Kidney (tissue), 22 donors: ENCODE measurements at regions of chr2 and their contacts with region 1.

Region 1: GRCh38 chr2:30711646-30712085 is 95.6 kb downstream of the CAPN13 start:
- DNase-seq: peak; percentile 86 to 93 (median 89)
- H3K4me3 ChIP-seq: no peak overlapping the region
- H3K27ac ChIP-seq: no peak overlapping the region
- H3K4me1 ChIP-seq: peaks cover 0 to 3% (median 0%) of the 10 kb centered on the region in 3 donors
- H3K27me3 ChIP-seq: no peaks in the 10 kb centered on the region
- CTCF ChIP-seq: peak; percentile 99

Region 2: DNA sequence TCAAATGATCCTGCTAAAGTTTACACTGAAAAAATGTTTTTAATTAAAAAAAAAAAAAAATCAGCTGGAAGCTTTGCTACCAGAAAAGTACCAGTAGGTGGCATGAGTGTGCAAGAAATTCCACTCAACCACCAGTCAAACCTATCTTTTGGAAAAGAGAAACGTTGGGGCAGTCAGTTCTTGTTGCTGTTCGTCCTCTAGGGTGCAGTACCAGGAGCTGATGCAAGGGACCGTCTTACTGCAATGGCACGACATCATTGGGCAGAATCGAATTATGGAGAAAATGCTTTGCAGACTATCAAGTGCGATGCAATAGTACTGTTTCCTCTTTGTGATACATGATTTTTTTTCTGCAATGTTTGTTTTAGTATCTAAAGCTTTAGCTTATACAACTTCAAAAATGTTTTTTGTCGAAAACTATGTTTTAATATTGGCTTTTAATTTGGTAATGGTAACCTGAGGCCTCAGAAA is 546.6 kb before region 1 on chr2:
- intact Hi-C with region 1: loop called (anchors 10 kb)
- DNase-seq: peak in 4 of 5 donors; percentile 68 to 93 (median 82)
- H3K4me3 ChIP-seq: no peak overlapping the region
- H3K27ac ChIP-seq: no peak overlapping the region
- H3K4me1 ChIP-seq: no peaks in the 10 kb centered on the region
- H3K27me3 ChIP-seq: no peaks in the 10 kb centered on the region
- CTCF ChIP-seq: peak; percentile 80

Region 3: DNA sequence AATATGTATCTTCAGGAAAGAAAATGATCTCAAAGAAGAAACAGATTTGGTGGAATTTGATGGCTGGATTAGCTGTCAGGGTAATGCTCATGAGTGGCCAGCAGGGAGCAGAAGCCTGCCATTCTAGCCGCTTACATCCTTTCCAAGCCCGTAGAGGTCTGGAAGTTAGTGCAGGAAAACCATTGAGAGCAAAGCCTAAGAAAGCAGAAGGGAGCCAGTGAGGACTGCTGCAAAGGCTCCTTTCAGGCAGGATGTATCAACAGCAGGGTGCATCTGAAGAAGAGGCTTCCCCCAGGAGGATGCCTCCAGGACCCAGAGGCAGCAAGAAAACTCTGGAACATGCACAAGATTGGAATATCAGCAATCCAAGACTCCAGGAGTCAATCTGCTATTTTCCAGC is 503.2 kb before region 1 on chr2:
- intact Hi-C with region 1: loop called (anchors 5 kb)
- DNase-seq: peak; percentile 68 to 90 (median 73)
- H3K4me3 ChIP-seq: no peak overlapping the region
- H3K27ac ChIP-seq: no peak overlapping the region
- H3K4me1 ChIP-seq: no peaks in the 10 kb centered on the region
- H3K27me3 ChIP-seq: no peaks in the 10 kb centered on the region
- CTCF ChIP-seq: peak; percentile 91

Region 4: DNA sequence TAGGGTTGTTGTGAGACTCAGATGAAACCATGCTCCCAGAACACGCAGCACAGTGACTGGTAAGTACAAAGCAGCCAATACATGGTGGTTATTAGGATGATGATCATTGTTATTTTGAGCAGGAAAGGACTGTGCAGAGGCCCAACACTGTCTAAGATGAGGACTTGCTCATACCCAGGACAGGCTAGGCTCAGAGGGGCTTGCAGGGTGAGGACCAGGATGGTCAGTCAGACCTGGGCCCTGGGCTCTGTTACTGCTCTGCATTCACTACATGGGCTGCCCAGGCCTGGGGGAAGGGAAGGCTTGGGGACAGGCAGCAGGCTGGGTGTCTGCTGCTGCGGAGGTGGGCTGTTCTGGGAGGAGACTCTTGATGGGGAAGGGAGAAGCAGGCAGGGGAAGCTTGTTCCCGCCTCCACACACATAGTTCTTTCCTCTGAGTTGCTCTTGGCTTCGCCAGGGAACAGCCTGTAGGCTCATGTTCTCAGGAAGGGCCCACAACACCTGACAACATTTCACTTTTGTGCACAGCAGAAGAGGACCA is 78.1 kb after region 1 on chr2:
- intact Hi-C with region 1: no loop called
- DNase-seq: no peak
- H3K4me3 ChIP-seq: no peak overlapping the region
- H3K27ac ChIP-seq: no peak overlapping the region
- H3K4me1 ChIP-seq: no peaks in the 10 kb centered on the region
- H3K27me3 ChIP-seq: no peaks in the 10 kb centered on the region
- CTCF ChIP-seq: no peak

Region 5: GRCh38 chr2:31168291-31168690 is 456.6 kb after region 1 on chr2:
- intact Hi-C with region 1: loop called (anchors 10 kb)
- DNase-seq: no peak
- H3K4me3 ChIP-seq: no peak overlapping the region
- H3K27ac ChIP-seq: no peak overlapping the region
- H3K4me1 ChIP-seq: no peaks in the 10 kb centered on the region
- H3K27me3 ChIP-seq: no peaks in the 10 kb centered on the region
- CTCF ChIP-seq: no peak

Region 6: GRCh38 chr2:31333527-31334183 is 622.0 kb after region 1 on chr2:
- intact Hi-C with region 1: loop called (anchors 10 kb)
- DNase-seq: peak; percentile 84 to 91 (median 89)
- H3K4me3 ChIP-seq: no peak overlapping the region
- H3K27ac ChIP-seq: no peak overlapping the region
- H3K4me1 ChIP-seq: no peaks in the 10 kb centered on the region
- H3K27me3 ChIP-seq: no peaks in the 10 kb centered on the region
- CTCF ChIP-seq: peak; percentile 97